ENCODE measurements at regions of chr14 and their contacts with region 1.

Region 1: DNA sequence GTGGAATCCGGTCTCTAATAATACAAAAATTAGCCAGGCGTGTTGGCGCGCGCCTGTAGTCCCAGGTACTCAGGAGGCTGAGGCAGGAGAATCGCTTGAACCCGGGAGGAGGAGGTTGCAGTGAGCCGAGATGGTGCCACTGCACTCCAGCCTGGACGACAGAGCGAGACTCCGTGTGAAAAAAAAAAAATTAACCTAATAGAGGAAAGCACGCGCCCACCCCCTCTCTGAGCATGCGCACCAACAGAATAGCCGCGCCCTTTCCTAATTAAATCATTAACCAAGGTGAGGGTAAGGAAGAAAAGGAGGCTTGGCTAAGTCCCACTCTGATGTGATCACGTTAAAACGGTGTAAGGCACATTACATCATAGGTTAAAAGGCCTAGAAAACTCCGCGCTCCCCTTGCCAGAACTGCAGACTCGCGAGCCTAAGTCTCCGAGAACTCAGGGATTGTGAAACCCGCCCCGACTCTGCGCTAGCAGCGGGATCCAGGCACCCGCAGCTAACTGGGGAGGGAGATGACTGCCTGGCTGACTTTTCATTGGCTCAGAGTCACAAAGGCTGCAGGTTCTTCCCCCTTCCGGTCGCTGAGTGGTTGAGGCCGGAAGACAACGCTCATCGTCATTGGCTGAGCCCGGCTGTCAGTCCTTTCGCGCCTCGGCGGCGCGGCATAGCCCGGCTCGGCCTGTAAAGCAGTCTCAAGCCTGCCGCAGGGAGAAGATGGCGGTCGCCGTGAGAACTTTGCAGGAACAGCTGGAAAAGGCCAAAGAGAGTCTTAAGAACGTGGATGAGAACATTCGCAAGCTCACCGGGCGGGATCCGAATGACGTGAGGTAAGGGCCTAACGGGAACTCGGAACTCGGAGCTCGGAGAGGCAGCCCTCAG is at the start of gene PNN:
- DNase-seq: peak; percentile 93 to 99
- ATAC-seq: peak; percentile 84 to 97 (median 88)
- H3K4me3 ChIP-seq: peak within 1 kb of the TSS; percentile 86
- H3K4me3 Mint-ChIP-seq: peak within 1 kb of the TSS; percentile 99
- H3K27ac ChIP-seq: peak within 1 kb of the TSS; percentile 94
- H3K27ac Mint-ChIP-seq: peak within 1 kb of the TSS; percentile 97 to 99
- H3K4me1 ChIP-seq: peaks cover 17% of the 10 kb centered on the region
- H3K4me1 Mint-ChIP-seq: peaks cover 33 to 42% of the 10 kb centered on the region in 2 donors
- H3K27me3 ChIP-seq: no peaks in the 10 kb centered on the region
- H3K27me3 Mint-ChIP-seq: no peaks in the 10 kb centered on the region
- CTCF ChIP-seq: no peak
- total RNA-seq, gene PNN: 121 to 153 (median 145) TPM

Region 2: GRCh38 chr14:38079268-38079667 is 1095.5 kb before region 1 on chr14:
- intact Hi-C with region 1: loop called (anchors 10 kb)
- DNase-seq: no peak
- ATAC-seq: peak in 1 of 3 donors; percentile 22
- H3K4me3 ChIP-seq: no peak overlapping the region
- H3K4me3 Mint-ChIP-seq: peak overlapping the region; percentile 72
- H3K27ac ChIP-seq: no peak overlapping the region
- H3K27ac Mint-ChIP-seq: peak overlapping the region; percentile 80 to 84
- H3K4me1 ChIP-seq: peaks cover 20% of the 10 kb centered on the region
- H3K4me1 Mint-ChIP-seq: peaks cover 43 to 46% of the 10 kb centered on the region in 2 donors
- H3K27me3 ChIP-seq: no peaks in the 10 kb centered on the region
- H3K27me3 Mint-ChIP-seq: peaks cover 0 to 3% of the 10 kb centered on the region in 2 donors
- CTCF ChIP-seq: no peak

Region 3: DNA sequence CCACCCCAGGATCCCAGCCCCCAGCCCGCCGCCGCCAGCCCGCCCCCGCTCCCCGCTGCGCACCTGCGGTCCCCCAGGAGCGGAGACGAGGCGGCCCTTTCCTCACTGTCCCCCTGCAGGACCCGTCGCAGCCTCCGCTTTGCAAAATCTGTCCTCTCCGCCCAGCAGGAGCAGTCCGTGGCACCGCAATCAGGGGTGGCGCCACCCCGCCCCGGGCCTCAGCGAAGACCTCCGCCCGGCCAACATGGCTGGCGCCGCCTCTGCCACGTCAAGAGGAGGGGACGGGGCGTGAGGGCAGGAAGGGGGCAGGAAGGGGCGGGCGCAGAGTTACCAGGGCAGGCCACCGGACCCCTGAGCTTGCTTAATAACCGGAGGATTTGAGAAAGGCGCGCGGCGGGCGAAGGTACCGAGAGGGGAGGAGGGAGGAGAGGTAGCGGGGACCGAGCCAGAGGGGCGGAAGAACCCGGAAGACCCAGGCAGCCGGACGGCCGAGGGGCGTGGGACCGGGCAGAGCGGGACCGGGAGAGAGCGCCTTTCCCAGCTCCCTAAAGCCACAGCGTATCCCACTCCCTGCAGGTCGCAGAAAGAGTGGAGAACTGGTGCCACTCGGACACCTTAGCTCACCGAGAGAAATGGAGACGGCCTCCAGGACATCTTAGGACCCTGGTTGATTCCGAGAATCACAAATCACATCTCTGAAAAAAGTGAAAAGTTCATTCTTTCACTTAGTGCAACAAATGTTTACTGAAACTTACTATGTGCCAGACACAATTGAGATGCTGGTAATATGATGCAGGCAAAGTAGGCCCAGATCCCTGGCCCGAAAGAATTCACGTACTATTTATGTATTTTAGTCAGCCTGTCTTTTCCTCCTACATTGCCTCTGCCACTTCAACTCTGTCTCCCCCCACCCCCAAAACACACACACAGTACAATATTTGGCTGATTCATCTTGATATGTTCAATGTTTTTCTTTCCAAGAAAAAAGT is 71.5 kb before region 1 on chr14 and contains the start of gene SEC23A:
- intact Hi-C with region 1: loop called (anchors 1 kb)
- DNase-seq: peak; percentile 82 to 88
- ATAC-seq: peak; percentile 97 to 99 (median 98)
- H3K4me3 ChIP-seq: peak within 1 kb of the TSS; percentile 95
- H3K4me3 Mint-ChIP-seq: peak within 1 kb of the TSS; percentile 98
- H3K27ac ChIP-seq: peak within 1 kb of the TSS; percentile 95
- H3K27ac Mint-ChIP-seq: peak within 1 kb of the TSS; percentile 91 to 96
- H3K4me1 ChIP-seq: peaks cover 12% of the 10 kb centered on the region
- H3K4me1 Mint-ChIP-seq: peaks cover 23 to 36% of the 10 kb centered on the region in 2 donors
- H3K27me3 ChIP-seq: no peaks in the 10 kb centered on the region
- H3K27me3 Mint-ChIP-seq: no peaks in the 10 kb centered on the region
- CTCF ChIP-seq: no peak
- total RNA-seq, gene SEC23A: 61.3 to 75.5 (median 67.8) TPM

Region 4: GRCh38 chr14:39114073-39114838 is 60.5 kb before region 1 on chr14 and contains the start of gene GEMIN2:
- intact Hi-C with region 1: loop called (anchors 1 kb)
- DNase-seq: peak; percentile 91 to 98
- ATAC-seq: peak; percentile 98
- H3K4me3 ChIP-seq: peak within 1 kb of the TSS; percentile 85
- H3K4me3 Mint-ChIP-seq: peak within 1 kb of the TSS; percentile 95
- H3K27ac ChIP-seq: peak within 1 kb of the TSS; percentile 83
- H3K27ac Mint-ChIP-seq: peak within 1 kb of the TSS; percentile 91 to 94
- H3K4me1 ChIP-seq: peaks cover 5% of the 10 kb centered on the region
- H3K4me1 Mint-ChIP-seq: peaks cover 12 to 15% of the 10 kb centered on the region in 2 donors
- H3K27me3 ChIP-seq: no peaks in the 10 kb centered on the region
- H3K27me3 Mint-ChIP-seq: peaks cover 4 to 7% of the 10 kb centered on the region in 2 donors
- CTCF ChIP-seq: no peak
- total RNA-seq, gene GEMIN2: 8.4 to 12.8 (median 10.0) TPM

Region 5: GRCh38 chr14:39154594-39155189 is 20.1 kb before region 1 on chr14:
- intact Hi-C with region 1: no loop called
- DNase-seq: no peak
- ATAC-seq: no peak
- H3K4me3 ChIP-seq: no peak overlapping the region
- H3K4me3 Mint-ChIP-seq: no peak overlapping the region
- H3K27ac ChIP-seq: no peak overlapping the region
- H3K27ac Mint-ChIP-seq: no peak overlapping the region
- H3K4me1 ChIP-seq: no peaks in the 10 kb centered on the region
- H3K4me1 Mint-ChIP-seq: no peaks in the 10 kb centered on the region
- H3K27me3 ChIP-seq: no peaks in the 10 kb centered on the region
- H3K27me3 Mint-ChIP-seq: no peaks in the 10 kb centered on the region
- CTCF ChIP-seq: no peak

Region 6: GRCh38 chr14:39232554-39233415 is 58.0 kb after region 1 on chr14:
- intact Hi-C with region 1: loop called (anchors 2 kb)
- DNase-seq: peak in 1 of 2 donors; percentile 43
- ATAC-seq: peak; percentile 48 to 74 (median 63)
- H3K4me3 ChIP-seq: no peak overlapping the region
- H3K4me3 Mint-ChIP-seq: peak overlapping the region; percentile 79
- H3K27ac ChIP-seq: peak overlapping the region; percentile 82
- H3K27ac Mint-ChIP-seq: peak overlapping the region; percentile 83 to 92
- H3K4me1 ChIP-seq: peaks cover 27% of the 10 kb centered on the region
- H3K4me1 Mint-ChIP-seq: peaks cover 44 to 53% of the 10 kb centered on the region in 2 donors
- H3K27me3 ChIP-seq: no peaks in the 10 kb centered on the region
- H3K27me3 Mint-ChIP-seq: no peaks in the 10 kb centered on the region
- CTCF ChIP-seq: no peak

Region 7: GRCh38 chr14:39266871-39267591 is 92.2 kb after region 1 on chr14:
- intact Hi-C with region 1: loop called (anchors 2 kb)
- DNase-seq: peak; percentile 86
- ATAC-seq: peak; percentile 73 to 91 (median 83)
- H3K4me3 ChIP-seq: peak overlapping the region; percentile 87
- H3K4me3 Mint-ChIP-seq: peak overlapping the region; percentile 78
- H3K27ac ChIP-seq: peak overlapping the region; percentile 96
- H3K27ac Mint-ChIP-seq: peak overlapping the region; percentile 74 to 97
- H3K4me1 ChIP-seq: peaks cover 18% of the 10 kb centered on the region
- H3K4me1 Mint-ChIP-seq: peaks cover 56 to 59% of the 10 kb centered on the region in 2 donors
- H3K27me3 ChIP-seq: no peaks in the 10 kb centered on the region
- H3K27me3 Mint-ChIP-seq: no peaks in the 10 kb centered on the region
- CTCF ChIP-seq: no peak

Region 8: DNA sequence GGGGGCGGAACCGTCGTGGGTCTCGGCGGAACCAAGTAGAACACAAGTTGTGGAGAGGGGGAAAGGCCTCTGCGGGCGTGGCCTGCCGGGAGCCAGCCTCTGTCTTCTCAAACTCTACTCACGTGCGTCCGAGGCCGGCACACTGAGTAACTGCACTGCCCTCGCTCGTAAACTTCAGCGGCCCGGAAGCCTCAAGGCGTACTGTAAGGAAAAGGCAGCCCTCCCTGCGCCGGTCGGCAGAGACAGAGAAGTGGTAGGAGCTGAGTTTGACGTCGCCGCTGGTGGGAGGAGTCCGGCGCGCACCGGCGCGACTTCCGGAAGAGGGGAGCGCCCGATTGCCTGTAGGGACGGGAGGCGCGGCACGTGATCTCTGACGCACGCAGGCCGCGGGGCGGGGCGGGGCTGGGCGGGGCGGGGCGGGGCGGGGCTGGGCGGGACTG is 257.4 kb after region 1 on chr14 and contains the start of gene FBXO33:
- intact Hi-C with region 1: loop called (anchors 1 kb)
- DNase-seq: peak; percentile 96 to 98
- ATAC-seq: peak; percentile 84 to 93 (median 86)
- H3K4me3 ChIP-seq: peak within 1 kb of the TSS; percentile 98
- H3K4me3 Mint-ChIP-seq: peak within 1 kb of the TSS; percentile 100
- H3K27ac ChIP-seq: peak within 1 kb of the TSS; percentile 100
- H3K27ac Mint-ChIP-seq: peak within 1 kb of the TSS; percentile 100
- H3K4me1 ChIP-seq: peaks cover 22% of the 10 kb centered on the region
- H3K4me1 Mint-ChIP-seq: peaks cover 43 to 52% of the 10 kb centered on the region in 2 donors
- H3K27me3 ChIP-seq: no peaks in the 10 kb centered on the region
- H3K27me3 Mint-ChIP-seq: no peaks in the 10 kb centered on the region
- CTCF ChIP-seq: no peak
- total RNA-seq, gene FBXO33: 45.7 to 54.1 (median 50.2) TPM

Region 9: GRCh38 chr14:39665075-39665475 is 490.3 kb after region 1 on chr14:
- intact Hi-C with region 1: no loop called
- DNase-seq: no peak
- ATAC-seq: no peak
- H3K4me3 ChIP-seq: no peak overlapping the region
- H3K4me3 Mint-ChIP-seq: no peak overlapping the region
- H3K27ac ChIP-seq: no peak overlapping the region
- H3K27ac Mint-ChIP-seq: no peak overlapping the region
- H3K4me1 ChIP-seq: no peaks in the 10 kb centered on the region
- H3K4me1 Mint-ChIP-seq: no peaks in the 10 kb centered on the region
- H3K27me3 ChIP-seq: no peaks in the 10 kb centered on the region
- H3K27me3 Mint-ChIP-seq: no peaks in the 10 kb centered on the region
- CTCF ChIP-seq: no peak

Measured in natural killer cell (primary cell).